ENCODE measurements at regions of chr9 and their contacts with region 1.

Region 1: GRCh38 chr9:134030821-134031465 is 5.7 kb downstream of the BRD3OS start:
- DNase-seq: no peak
- ATAC-seq: no peak
- H3K4me3 ChIP-seq: no peak overlapping the region
- H3K4me3 Mint-ChIP-seq: no peak overlapping the region
- H3K27ac ChIP-seq: no peak overlapping the region
- H3K27ac Mint-ChIP-seq: no peak overlapping the region
- H3K4me1 ChIP-seq: peaks cover 0 to 8% of the 10 kb centered on the region in 2 experiments
- H3K4me1 Mint-ChIP-seq: peaks cover 7 to 18% (median 12%) of the 10 kb centered on the region in 3 donors
- H3K27me3 ChIP-seq: no peaks in the 10 kb centered on the region
- H3K27me3 Mint-ChIP-seq: no peaks in the 10 kb centered on the region

Region 2: DNA sequence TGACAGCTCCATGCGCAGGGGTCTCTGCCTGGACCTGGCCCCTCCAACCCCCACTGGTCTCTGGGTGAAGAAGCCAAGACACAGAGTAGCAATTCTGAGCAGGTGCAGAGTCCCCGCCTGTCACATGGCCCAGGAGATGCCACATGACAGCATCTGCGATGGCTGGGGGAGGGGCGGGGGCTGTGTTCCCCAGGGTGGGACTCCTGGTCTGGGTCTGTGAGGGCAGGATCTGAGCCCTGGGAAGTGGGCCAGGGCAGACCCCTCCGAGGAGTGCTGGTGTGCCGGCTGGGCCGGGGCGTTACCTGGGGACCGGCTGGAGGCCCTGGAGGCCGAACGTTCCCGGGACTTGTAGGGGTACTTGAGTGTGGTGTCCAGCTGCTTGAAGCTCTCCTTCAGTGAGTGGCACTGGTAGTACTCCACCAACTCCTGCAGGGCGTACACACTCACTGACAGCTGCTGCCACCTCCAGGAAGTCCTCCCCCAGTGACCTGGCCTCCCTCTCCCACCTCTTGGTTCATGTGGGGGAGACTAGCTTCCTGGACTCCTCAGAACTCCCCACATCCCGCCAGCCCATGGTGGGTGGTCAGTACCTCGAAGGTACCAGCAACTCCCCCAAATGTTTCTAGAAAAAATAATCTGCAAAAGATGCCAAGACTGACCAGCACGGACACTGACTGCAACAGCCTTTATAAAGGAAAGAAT is 260.7 kb before region 1 on chr9:
- CTCF ChIA-PET with region 1: interaction called in 1 of 2 experiments, 15 read pairs
- POLR2A ChIA-PET with region 1: no interaction called
- DNase-seq: peak in 1 of 35 experiments; percentile 9
- ATAC-seq: no peak
- H3K4me3 ChIP-seq: no peak overlapping the region
- H3K4me3 Mint-ChIP-seq: no peak overlapping the region
- H3K27ac ChIP-seq: no peak overlapping the region
- H3K27ac Mint-ChIP-seq: no peak overlapping the region
- H3K4me1 ChIP-seq: no peaks in the 10 kb centered on the region
- H3K4me1 Mint-ChIP-seq: no peaks in the 10 kb centered on the region
- H3K27me3 ChIP-seq: no peaks in the 10 kb centered on the region
- H3K27me3 Mint-ChIP-seq: no peaks in the 10 kb centered on the region

Region 3: GRCh38 chr9:134185536-134186011 is 154.6 kb after region 1 on chr9:
- CTCF ChIA-PET with region 1: no interaction called
- POLR2A ChIA-PET with region 1: no interaction called
- DNase-seq: peak in 21 of 35 experiments; percentile 15 to 74 (median 30)
- ATAC-seq: peak; percentile 9 to 90 (median 44)
- H3K4me3 ChIP-seq: peak overlapping the region in 1 of 2 donors; percentile 1
- H3K4me3 Mint-ChIP-seq: peak overlapping the region in 2 of 3 donors; percentile 7 to 64
- H3K27ac ChIP-seq: peak overlapping the region; percentile 41
- H3K27ac Mint-ChIP-seq: peak overlapping the region; percentile 80 to 82
- H3K4me1 ChIP-seq: peaks cover 17 to 33% of the 10 kb centered on the region in 2 experiments
- H3K4me1 Mint-ChIP-seq: peaks cover 27 to 33% (median 32%) of the 10 kb centered on the region in 3 donors
- H3K27me3 ChIP-seq: peaks cover 0 to 12% of the 10 kb centered on the region in 2 experiments
- H3K27me3 Mint-ChIP-seq: peaks cover 0 to 2% of the 10 kb centered on the region in 2 donors

Measured in T-cell (primary cell).